ENCODE measurements at regions of chr3 and their contacts with region 1.

Region 1: DNA sequence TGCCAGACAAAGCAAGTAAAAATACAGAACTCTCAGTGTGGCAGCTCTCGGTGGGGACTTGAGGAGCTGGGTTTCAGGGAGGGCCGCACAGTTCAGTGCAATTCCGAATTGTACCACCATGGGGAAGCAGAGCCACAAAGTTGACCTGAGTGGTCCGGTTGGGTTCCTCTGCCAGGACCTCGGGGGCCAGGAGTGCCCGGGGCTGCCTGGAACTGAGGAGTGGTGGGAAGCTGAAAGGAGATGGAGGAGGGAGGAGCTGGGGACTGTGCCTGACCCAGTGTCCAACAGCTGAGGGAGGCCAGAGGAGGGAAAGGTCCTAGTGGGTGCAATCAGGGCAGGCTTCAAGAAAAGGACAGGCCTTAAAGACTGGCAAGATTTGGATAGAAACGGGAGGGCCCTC is 32.2 kb upstream of the TRH start:
- DNase-seq: peak; percentile 92

Region 2: GRCh38 chr3:129627429-129628168 is 314.7 kb before region 1 on chr3:
- in situ Hi-C with region 1: loop called (anchors 25 kb)
- DNase-seq: peak; percentile 88

Measured in KBM-7 (cell line).